Transverse colon (tissue), 4 donors: ENCODE measurements at regions of chr9 and their contacts with region 1.

Region 1: DNA sequence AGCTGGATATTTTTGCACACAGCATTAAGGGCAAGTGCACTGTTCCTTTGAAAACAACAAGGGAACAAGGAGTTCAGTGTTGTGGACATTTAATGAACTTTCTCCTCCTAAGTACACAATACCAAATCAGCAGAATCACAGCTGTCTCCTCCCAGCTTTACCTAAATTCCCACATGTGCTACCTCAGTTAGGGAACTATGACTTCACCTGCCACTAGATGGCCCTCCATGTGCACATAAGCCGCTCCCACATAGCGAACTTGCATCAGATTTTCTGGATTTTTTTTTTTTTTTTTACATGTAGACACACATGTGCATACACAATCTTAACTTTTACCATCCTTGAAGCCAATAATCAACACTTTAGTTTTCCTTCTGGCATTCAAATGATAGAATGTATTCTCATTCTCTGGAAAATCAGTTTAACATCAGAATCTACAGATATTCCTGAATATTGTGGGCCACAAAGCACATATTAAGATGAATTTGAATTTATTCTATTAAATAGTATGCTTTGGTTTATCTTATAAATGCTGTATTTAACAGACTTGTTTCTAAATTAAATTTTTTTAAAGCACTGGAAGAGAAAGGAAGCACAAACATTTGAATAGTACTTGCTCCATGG is 123.6 kb downstream of the PALM2AKAP2 start:
- DNase-seq: peak; percentile 70
- H3K4me3 ChIP-seq: no peak overlapping the region
- H3K27ac ChIP-seq: no peak overlapping the region
- H3K4me1 ChIP-seq: peaks cover 12 to 32% (median 18%) of the 10 kb centered on the region in 4 donors
- H3K27me3 ChIP-seq: no peaks in the 10 kb centered on the region
- CTCF ChIP-seq: peak; percentile 71 to 92 (median 84)
- EP300 ChIP-seq: no peak
- POLR2A ChIP-seq: no peak

Region 2: GRCh38 chr9:110058304-110058953 is 154.8 kb after region 1 on chr9:
- in situ Hi-C with region 1: loop called (anchors 5 to 10 kb)
- intact Hi-C with region 1: no loop called
- DNase-seq: peak; percentile 66
- H3K4me3 ChIP-seq: no peak overlapping the region
- H3K27ac ChIP-seq: no peak overlapping the region
- H3K4me1 ChIP-seq: peaks cover 0 to 3% (median 0%) of the 10 kb centered on the region in 4 donors
- H3K27me3 ChIP-seq: no peaks in the 10 kb centered on the region
- CTCF ChIP-seq: peak; percentile 38 to 84 (median 57)
- EP300 ChIP-seq: no peak
- POLR2A ChIP-seq: no peak

Region 3: DNA sequence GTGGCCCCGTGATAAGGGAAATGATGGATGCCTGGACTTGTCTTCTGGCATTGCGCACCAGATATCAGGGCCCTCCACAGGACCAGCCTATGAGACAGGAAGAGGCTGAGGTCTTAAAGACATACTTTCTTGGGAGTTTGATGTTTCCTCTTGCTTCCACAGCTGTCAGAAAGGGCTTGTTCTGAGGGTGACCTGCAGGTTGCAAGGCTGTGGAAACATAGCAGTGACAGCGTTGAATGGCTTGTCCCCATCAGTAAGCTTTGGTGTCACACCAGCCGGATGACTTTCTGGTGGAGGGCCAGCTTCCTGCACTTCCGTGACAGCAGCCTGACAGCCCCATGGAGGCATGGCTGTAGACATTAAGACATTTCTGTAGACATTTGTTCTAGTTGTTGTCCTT is 161.2 kb after region 1 on chr9:
- in situ Hi-C with region 1: loop called in 1 of 4 experiments (anchors 5 kb)
- intact Hi-C with region 1: no loop called
- DNase-seq: no peak
- H3K4me3 ChIP-seq: no peak overlapping the region
- H3K27ac ChIP-seq: peak overlapping the region in 2 of 4 donors; percentile 1 to 16
- H3K4me1 ChIP-seq: peaks cover 0 to 22% (median 4%) of the 10 kb centered on the region in 4 donors
- H3K27me3 ChIP-seq: no peaks in the 10 kb centered on the region
- CTCF ChIP-seq: no peak
- EP300 ChIP-seq: no peak
- POLR2A ChIP-seq: no peak

Region 4: GRCh38 chr9:110152704-110153374 is 249.2 kb after region 1 on chr9:
- in situ Hi-C with region 1: loop called (anchors 5 kb)
- intact Hi-C with region 1: loop called (anchors 5 kb)
- DNase-seq: no peak
- H3K4me3 ChIP-seq: no peak overlapping the region
- H3K27ac ChIP-seq: peak overlapping the region in 2 of 4 donors; percentile 2 to 22
- H3K4me1 ChIP-seq: peaks cover 17 to 59% (median 30%) of the 10 kb centered on the region in 4 donors
- H3K27me3 ChIP-seq: no peaks in the 10 kb centered on the region
- CTCF ChIP-seq: peak; percentile 66 to 81 (median 69)
- EP300 ChIP-seq: no peak
- POLR2A ChIP-seq: no peak

Region 5: GRCh38 chr9:110217656-110218099 is 314.1 kb after region 1 on chr9:
- in situ Hi-C with region 1: no loop called
- intact Hi-C with region 1: loop called (anchors 5 kb)
- DNase-seq: no peak
- H3K4me3 ChIP-seq: no peak overlapping the region
- H3K27ac ChIP-seq: no peak overlapping the region
- H3K4me1 ChIP-seq: peaks cover 5 to 55% (median 12%) of the 10 kb centered on the region in 4 donors
- H3K27me3 ChIP-seq: no peaks in the 10 kb centered on the region
- CTCF ChIP-seq: peak; percentile 80 to 87 (median 82)
- EP300 ChIP-seq: no peak
- POLR2A ChIP-seq: no peak